H1 (cell line): ENCODE measurements at regions of chr9 and their contacts with region 1.

Region 1: DNA sequence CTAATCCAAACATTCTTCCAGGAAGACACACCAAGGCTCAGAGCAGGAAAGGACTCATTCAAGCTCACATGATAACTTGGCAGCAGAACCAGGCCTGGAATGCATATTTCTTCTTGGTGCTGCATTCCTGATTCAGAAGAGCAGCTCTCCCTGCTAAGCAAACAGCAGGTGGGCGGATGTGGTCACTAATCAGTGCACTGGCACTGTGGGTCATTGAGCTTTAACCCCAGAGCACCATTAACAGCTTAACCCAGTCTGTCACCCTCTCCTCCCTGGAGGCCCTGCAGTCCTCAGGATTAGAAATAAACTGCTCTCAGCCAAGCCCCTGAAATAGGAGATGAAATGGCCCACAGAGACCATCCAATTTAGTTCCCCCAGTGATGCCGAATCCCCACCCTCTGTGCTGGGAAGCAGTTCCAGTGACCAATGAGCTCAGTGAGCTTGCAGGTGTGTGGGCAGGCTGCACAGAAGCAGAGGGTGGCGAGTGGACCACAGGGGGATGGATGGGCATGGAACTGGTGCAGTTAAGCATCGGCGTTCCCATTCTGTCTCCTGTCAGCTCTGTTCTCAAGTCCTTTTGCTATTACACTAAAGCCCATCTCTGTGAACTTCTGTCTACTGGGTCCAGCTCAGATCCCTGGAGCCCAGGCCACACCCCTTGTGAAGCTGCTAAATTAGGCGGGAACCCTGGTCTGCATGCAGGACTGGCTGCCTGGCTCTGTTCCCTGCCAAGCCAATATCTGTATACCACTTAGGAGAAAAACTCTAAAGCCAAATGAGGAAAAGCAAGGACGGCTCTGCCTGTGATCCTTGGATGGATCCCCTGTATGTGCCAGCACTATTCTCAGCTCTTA is 16.6 kb upstream of the MEGF9 start:
- DNase-seq: no peak
- H3K4me3 ChIP-seq: no peak overlapping the region
- H3K27ac ChIP-seq: no peak overlapping the region; the same call in 1 of the 2 replicates
- H3K4me1 ChIP-seq: peaks cover 0 to 6% (median 0%) of the 10 kb centered on the region in 4 experiments; a peak in 3 of 7 replicates
- H3K27me3 ChIP-seq: no peaks in the 10 kb centered on the region
- CTCF ChIP-seq: no peak
- EP300 ChIP-seq: no peak
- POLR2A ChIP-seq: no peak
- RAD21 ChIP-seq: no peak

Region 2: GRCh38 chr9:120716483-120716882 is 14.4 kb before region 1 on chr9:
- CTCF ChIA-PET with region 1: interaction called, 16 read pairs
- POLR2A ChIA-PET with region 1: interaction called, 7 read pairs
- DNase-seq: no peak
- H3K4me3 ChIP-seq: no peak overlapping the region
- H3K27ac ChIP-seq: no peak overlapping the region
- H3K4me1 ChIP-seq: peaks cover 0 to 9% (median 8%) of the 10 kb centered on the region in 4 experiments; a peak in 4 of 7 replicates
- H3K27me3 ChIP-seq: peaks cover 4 to 17% (median 15%) of the 10 kb centered on the region in 4 experiments; a peak in 6 of 7 replicates
- CTCF ChIP-seq: no peak
- EP300 ChIP-seq: no peak
- POLR2A ChIP-seq: no peak
- RAD21 ChIP-seq: no peak

Region 3: GRCh38 chr9:120750421-120750820 is 19.5 kb after region 1 on chr9:
- CTCF ChIA-PET with region 1: interaction called, 13 read pairs
- POLR2A ChIA-PET with region 1: no interaction called
- DNase-seq: no peak
- H3K4me3 ChIP-seq: no peak overlapping the region
- H3K27ac ChIP-seq: no peak overlapping the region
- H3K4me1 ChIP-seq: no peaks in the 10 kb centered on the region
- H3K27me3 ChIP-seq: no peaks in the 10 kb centered on the region
- CTCF ChIP-seq: no peak
- EP300 ChIP-seq: no peak
- POLR2A ChIP-seq: no peak
- RAD21 ChIP-seq: no peak

Region 4: DNA sequence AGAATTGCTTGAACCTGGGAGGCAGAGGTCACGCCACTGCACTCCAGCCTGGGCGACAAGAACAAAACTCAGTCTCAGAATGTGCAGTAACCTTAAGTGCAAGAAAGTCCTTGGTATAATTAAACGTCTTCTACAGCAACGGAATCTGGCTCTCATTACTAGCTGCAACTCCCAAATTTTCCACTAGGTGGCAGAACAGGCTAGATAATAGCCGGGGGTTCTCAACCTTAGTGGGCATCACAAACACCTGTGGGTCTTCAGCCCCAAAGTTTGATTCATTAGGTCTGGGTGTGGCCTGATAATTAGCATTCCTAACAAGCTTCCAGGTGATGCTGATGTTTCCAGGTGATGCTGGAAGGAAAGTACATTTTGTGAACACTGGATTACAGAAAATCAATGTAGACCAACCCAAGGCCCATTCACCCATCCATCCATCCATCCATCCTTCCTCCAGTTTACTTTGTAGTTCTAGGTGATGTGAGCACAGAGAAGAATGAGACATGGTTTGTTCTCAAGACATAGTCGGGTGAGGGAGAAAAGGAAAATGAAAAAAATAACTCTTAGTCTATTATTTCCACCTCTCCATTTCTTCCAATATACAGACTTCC is 25.0 kb after region 1 on chr9:
- CTCF ChIA-PET with region 1: interaction called, 13 read pairs
- POLR2A ChIA-PET with region 1: no interaction called
- DNase-seq: peak; percentile 13 to 85
- H3K4me3 ChIP-seq: no peak overlapping the region
- H3K27ac ChIP-seq: no peak overlapping the region
- H3K4me1 ChIP-seq: no peaks in the 10 kb centered on the region
- H3K27me3 ChIP-seq: no peaks in the 10 kb centered on the region
- CTCF ChIP-seq: peak in 2 of 3 experiments; percentile 84 to 85; a peak in 3 of 4 replicates
- EP300 ChIP-seq: no peak
- POLR2A ChIP-seq: no peak
- RAD21 ChIP-seq: peak; percentile 89 to 93